SK-N-SH (cell line): ENCODE measurements at regions of chr14 and their contacts with region 1.

Region 1: DNA sequence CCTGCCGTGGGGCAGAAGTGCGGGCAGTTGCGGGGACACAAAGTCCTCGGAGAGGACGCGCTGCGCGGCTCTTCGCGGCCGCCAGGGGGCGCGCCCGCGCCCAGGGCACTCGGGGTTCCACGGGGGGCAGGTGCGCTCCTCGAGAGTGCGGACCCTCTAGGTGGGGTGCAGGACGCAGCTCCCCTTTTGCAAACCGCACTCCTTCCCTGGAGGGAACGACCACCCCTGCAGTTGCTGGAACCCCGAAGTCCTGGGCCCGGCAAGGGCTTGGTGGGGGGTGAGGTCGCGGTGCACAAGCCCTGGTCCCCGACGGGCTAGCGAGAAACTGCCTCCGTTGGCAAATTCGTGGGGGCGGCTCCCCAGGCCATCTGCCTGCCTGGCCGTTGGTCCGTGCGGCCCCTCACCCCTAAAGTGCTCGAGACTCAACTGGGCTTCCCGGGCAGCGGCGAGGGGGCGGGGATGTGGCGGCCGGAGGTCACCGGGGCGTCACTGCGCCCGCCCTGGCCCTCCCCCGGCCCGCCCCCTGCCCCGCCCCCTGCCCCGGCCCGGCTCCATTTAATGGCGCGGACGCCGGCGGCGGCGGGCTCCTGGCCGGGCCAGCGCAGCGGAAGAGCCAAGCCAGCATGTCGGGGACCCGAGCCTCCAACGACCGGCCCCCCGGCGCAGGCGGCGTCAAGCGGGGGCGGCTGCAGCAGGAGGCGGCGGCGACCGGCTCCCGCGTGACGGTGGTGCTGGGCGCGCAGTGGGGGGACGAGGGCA is at the start of gene ADSS1:
- DNase-seq: peak; percentile 98
- H3K4me3 ChIP-seq: peak within 1 kb of the TSS; percentile 60 to 69
- H3K27ac ChIP-seq: peak within 1 kb of the TSS in 1 of 2 experiments; percentile 80; a peak in 1 of 4 replicates
- H3K4me1 ChIP-seq: peaks cover 0 to 35% of the 10 kb centered on the region in 2 experiments; a peak in 2 of 4 replicates
- H3K27me3 ChIP-seq: no peaks in the 10 kb centered on the region
- CTCF ChIP-seq: peak; percentile 67
- EP300 ChIP-seq: no peak
- RAD21 ChIP-seq: 0 out of 2 replicates have a peak, but pooled peaks have one; percentile 14
- polyA plus RNA-seq, gene ADSS1: 11.8 and 14.3 TPM in 2 replicates

Region 2: GRCh38 chr14:104689109-104689880 is 34.5 kb before region 1 on chr14 and contains the start of gene INF2:
- CTCF ChIA-PET with region 1: interaction called, 18 read pairs
- POLR2A ChIA-PET with region 1: no interaction called
- DNase-seq: peak; percentile 97
- H3K4me3 ChIP-seq: peak within 1 kb of the TSS; percentile 87 to 91
- H3K27ac ChIP-seq: peak within 1 kb of the TSS; percentile 36 to 47; a peak in 3 of 4 replicates
- H3K4me1 ChIP-seq: peaks cover 13 to 36% of the 10 kb centered on the region in 2 experiments
- H3K27me3 ChIP-seq: no peaks in the 10 kb centered on the region
- CTCF ChIP-seq: no peak
- EP300 ChIP-seq: no peak
- RAD21 ChIP-seq: no peak
- polyA plus RNA-seq, gene INF2: 20.1 and 32.5 TPM in 2 replicates

Region 3: GRCh38 chr14:104708606-104709268 is 15.1 kb before region 1 on chr14:
- CTCF ChIA-PET with region 1: interaction called, 22 read pairs
- POLR2A ChIA-PET with region 1: no interaction called
- DNase-seq: peak; percentile 97
- H3K4me3 ChIP-seq: no peak overlapping the region; a peak in 1 of 4 replicates
- H3K27ac ChIP-seq: no peak overlapping the region
- H3K4me1 ChIP-seq: no peaks in the 10 kb centered on the region; a peak in 1 of 4 replicates
- H3K27me3 ChIP-seq: no peaks in the 10 kb centered on the region
- CTCF ChIP-seq: peak; percentile 96
- EP300 ChIP-seq: no peak
- RAD21 ChIP-seq: peak; percentile 79

Region 4: GRCh38 chr14:104735830-104736642 is 12.2 kb after region 1 on chr14:
- CTCF ChIA-PET with region 1: interaction called, 23 read pairs
- POLR2A ChIA-PET with region 1: no interaction called
- DNase-seq: peak; percentile 60
- H3K4me3 ChIP-seq: no peak overlapping the region
- H3K27ac ChIP-seq: peak overlapping the region in 1 of 2 experiments; percentile 16; a peak in 1 of 4 replicates
- H3K4me1 ChIP-seq: peaks cover 0 to 6% of the 10 kb centered on the region in 2 experiments; a peak in 1 of 4 replicates
- H3K27me3 ChIP-seq: no peaks in the 10 kb centered on the region
- CTCF ChIP-seq: no peak
- EP300 ChIP-seq: no peak
- RAD21 ChIP-seq: no peak

Region 5: GRCh38 chr14:104810316-104810715 is 86.5 kb after region 1 on chr14:
- CTCF ChIA-PET with region 1: no interaction called
- POLR2A ChIA-PET with region 1: no interaction called
- DNase-seq: no peak
- H3K4me3 ChIP-seq: no peak overlapping the region
- H3K27ac ChIP-seq: no peak overlapping the region
- H3K4me1 ChIP-seq: peaks cover 0 to 9% of the 10 kb centered on the region in 2 experiments; a peak in 2 of 4 replicates
- H3K27me3 ChIP-seq: no peaks in the 10 kb centered on the region
- CTCF ChIP-seq: no peak
- EP300 ChIP-seq: no peak
- RAD21 ChIP-seq: no peak